ENCODE measurements at regions of chr17 and their contacts with region 1.

Region 1: DNA sequence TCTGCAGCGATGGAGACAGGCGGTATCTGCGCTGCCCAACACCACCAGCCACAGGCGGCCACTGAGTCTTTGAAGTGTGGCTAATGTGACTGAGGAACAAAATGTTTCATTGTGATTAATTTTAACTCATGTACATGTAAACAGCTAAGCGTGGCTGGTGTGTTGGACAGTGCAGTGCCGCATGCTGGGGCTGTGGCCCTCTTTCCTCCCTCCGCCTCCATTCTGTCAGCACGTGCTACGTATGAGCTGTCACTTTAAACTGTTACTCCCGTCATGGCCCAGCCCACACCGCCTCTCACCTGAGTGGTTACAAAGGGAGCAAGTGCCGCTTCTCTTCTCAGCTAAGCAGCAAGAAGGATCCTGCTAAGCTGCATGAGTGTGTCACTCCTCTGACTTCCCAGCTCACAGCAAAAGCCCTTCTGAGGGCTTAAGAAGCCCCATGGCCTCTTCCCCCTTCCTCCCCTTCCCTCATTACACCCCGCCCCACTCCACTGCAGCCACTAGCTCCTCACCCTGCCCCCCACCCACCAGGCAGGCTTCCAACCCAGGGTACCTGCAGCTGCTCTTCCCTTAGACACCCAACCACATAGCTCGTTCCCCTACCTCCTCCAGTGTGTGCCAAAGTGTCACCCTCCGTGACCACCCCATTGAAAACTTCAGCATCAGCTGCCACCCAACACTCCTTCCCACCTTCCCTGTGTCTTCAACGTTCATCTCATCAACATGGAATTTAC is 15.0 kb downstream of the HASPIN start:
- DNase-seq: no peak
- H3K4me3 ChIP-seq: no peak overlapping the region
- H3K27ac ChIP-seq: no peak overlapping the region
- H3K4me1 ChIP-seq: no peaks in the 10 kb centered on the region
- H3K27me3 ChIP-seq: peaks cover 0 to 5% of the 10 kb centered on the region in 2 experiments
- CTCF ChIP-seq: no peak
- POLR2A ChIP-seq: no peak

Region 2: GRCh38 chr17:3048767-3049471 is 689.8 kb before region 1 on chr17:
- CTCF ChIA-PET with region 1: interaction called, 7 read pairs
- POLR2A ChIA-PET with region 1: interaction called, 5 read pairs
- dilution Hi-C with region 1: no loop called
- intact Hi-C with region 1: loop called (anchors 5 kb)
- DNase-seq: peak; percentile 99
- H3K4me3 ChIP-seq: peak overlapping the region; percentile 44 to 75 (median 72)
- H3K27ac ChIP-seq: no peak overlapping the region
- H3K4me1 ChIP-seq: no peaks in the 10 kb centered on the region
- H3K27me3 ChIP-seq: no peaks in the 10 kb centered on the region
- CTCF ChIP-seq: peak; percentile 74 to 86
- POLR2A ChIP-seq: peak; percentile 70

Region 3: DNA sequence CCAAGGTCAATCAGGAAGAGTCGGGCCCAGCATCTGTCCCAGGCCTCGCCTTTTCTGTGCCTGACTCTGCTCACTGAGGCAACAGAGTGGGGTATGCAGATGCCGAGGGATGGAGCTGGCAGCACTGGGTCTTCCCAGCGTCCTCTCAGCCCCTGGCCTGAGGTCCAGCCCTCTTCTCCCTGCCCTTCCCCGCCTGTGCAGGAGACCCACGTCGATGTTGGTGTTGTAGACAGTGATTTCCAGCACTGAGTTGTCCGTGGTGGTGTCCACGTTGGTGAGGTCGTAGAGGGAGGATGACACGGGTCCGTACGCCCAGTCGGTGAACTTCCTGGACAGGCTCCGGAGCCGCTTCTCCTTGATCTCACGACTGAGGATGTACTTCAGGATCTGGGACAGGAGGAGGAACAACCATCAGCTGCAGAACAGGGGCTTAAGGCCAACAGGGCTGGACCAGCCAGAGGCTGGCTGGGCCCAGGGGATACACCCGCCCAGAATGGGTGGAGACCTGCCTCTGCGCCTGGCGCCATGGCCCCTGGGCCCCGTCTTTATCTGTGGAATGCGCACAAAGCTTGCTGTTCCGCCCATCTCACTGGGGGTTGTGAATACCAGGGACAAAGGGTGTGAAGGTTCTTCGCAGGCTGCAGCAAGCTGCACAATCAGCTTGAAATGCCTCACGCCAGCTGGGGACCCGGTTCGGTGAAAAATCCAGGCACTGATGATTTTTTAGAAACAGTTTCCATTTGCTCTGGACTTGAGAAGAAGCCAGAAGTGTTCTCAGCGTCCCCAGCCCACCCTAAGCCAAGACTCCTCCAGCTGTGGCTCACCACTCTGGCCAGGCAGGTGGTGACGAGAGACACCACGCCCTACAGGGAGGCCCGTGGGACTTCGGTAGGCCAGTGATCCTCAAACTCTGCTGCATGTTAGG is 208.7 kb before region 1 on chr17:
- CTCF ChIA-PET with region 1: no interaction called
- POLR2A ChIA-PET with region 1: no interaction called
- dilution Hi-C with region 1: no loop called
- intact Hi-C with region 1: no loop called
- DNase-seq: no peak
- H3K4me3 ChIP-seq: no peak overlapping the region
- H3K27ac ChIP-seq: no peak overlapping the region
- H3K4me1 ChIP-seq: no peaks in the 10 kb centered on the region
- H3K27me3 ChIP-seq: no peaks in the 10 kb centered on the region
- CTCF ChIP-seq: no peak
- POLR2A ChIP-seq: no peak

Region 4: GRCh38 chr17:3723556-3724369 is 15.0 kb before region 1 on chr17 and contains the start of gene HASPIN:
- CTCF ChIA-PET with region 1: interaction called, 34 read pairs
- POLR2A ChIA-PET with region 1: no interaction called
- dilution Hi-C with region 1: no loop called
- intact Hi-C with region 1: no loop called
- DNase-seq: peak; percentile 89
- H3K4me3 ChIP-seq: peak within 1 kb of the TSS; percentile 70 to 91 (median 89)
- H3K27ac ChIP-seq: peak within 1 kb of the TSS; percentile 54
- H3K4me1 ChIP-seq: peaks cover 28% of the 10 kb centered on the region
- H3K27me3 ChIP-seq: no peaks in the 10 kb centered on the region
- CTCF ChIP-seq: peak; percentile 9 to 56
- POLR2A ChIP-seq: peak; percentile 92
- total RNA-seq, gene HASPIN: 11.8 and 13.2 TPM in 2 replicates

Region 5: DNA sequence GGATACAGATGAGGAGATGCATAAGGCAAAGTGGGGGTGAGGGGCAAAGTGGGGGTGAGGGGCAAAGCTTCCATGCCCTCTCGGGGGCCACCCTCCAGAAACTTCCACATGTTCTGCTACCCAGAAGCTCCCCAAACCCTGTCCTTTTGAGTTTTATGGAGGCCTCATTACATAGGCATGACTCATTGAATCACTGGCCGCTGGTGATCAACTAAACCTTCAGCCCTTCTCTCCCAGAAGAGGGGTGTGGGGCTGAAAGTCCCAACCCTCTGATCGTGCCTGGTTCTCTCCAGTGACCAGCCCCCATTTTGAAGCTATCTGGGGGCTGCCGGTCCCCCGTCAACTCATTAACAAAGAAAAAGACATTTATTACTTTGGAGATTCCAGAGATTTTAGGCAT is 34.8 kb after region 1 on chr17:
- CTCF ChIA-PET with region 1: interaction called, 11 read pairs
- POLR2A ChIA-PET with region 1: no interaction called
- dilution Hi-C with region 1: no loop called
- intact Hi-C with region 1: no loop called
- DNase-seq: no peak
- H3K4me3 ChIP-seq: no peak overlapping the region
- H3K27ac ChIP-seq: no peak overlapping the region
- H3K4me1 ChIP-seq: no peaks in the 10 kb centered on the region
- H3K27me3 ChIP-seq: no peaks in the 10 kb centered on the region
- CTCF ChIP-seq: no peak
- POLR2A ChIP-seq: no peak

Region 6: DNA sequence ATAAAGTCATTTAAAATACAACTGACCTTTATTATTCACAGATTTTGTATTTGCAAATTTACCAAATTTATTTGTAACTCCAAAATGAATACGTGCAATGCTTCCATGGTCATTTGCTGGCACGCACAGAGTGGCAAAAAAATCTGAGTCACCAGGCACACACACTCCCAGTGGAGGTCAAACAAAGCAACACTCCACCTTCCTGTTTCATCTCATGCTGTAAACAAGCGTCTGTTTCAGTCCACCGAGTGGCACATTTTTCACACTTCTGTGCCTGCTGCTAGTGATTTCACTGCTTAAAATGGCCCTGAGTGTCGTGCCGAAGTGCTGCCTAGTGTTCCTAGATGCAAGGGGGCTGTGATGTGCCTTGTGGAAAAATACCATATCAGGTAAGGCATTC is 80.1 kb after region 1 on chr17:
- CTCF ChIA-PET with region 1: interaction called, 20 read pairs
- POLR2A ChIA-PET with region 1: no interaction called
- dilution Hi-C with region 1: no loop called
- intact Hi-C with region 1: no loop called
- DNase-seq: peak; percentile 88
- H3K4me3 ChIP-seq: no peak overlapping the region
- H3K27ac ChIP-seq: peak overlapping the region; percentile 6
- H3K4me1 ChIP-seq: peaks cover 10% of the 10 kb centered on the region
- H3K27me3 ChIP-seq: no peaks in the 10 kb centered on the region
- CTCF ChIP-seq: no peak
- POLR2A ChIP-seq: no peak

Region 7: DNA sequence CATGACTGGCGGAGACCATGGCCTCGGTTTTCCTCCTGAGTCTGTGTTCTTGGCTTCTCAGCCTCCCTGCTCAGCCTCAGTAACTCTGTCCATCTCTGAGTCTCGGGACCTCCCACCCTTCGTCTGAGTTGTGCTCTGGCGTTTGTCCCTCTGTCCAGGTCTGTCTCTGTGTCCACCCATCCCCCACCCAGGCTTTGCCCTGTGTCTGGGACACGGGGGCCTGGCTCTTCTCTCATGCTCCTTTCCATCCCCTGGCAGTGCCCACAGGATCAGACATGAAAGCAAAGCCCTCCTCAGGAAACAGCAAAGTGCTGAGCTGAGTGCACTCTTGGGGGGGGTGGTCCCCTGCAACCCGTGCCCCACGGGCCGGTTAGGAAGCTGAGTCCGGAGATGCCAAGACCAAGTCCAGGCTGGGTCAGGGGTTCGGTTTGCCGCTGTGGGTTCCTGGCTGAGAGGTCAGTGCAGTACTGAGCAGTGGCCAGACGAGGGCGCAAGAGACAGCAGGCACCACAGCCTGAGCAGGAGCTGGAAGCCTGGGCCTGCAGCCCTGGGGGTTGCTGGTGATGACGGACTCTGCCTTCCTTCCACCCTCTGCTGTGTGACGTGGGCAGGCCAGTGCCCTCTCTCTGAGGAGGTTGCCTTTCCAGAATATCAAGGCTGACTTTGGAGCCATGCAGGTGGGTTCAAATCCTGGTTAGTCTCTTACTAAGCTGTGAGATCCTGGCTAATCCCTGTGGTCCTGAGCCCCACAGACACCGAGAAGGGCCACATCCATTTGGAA is 175.0 kb after region 1 on chr17:
- CTCF ChIA-PET with region 1: interaction called, 29 read pairs
- POLR2A ChIA-PET with region 1: no interaction called
- dilution Hi-C with region 1: no loop called
- intact Hi-C with region 1: no loop called
- DNase-seq: peak; percentile 73
- H3K4me3 ChIP-seq: no peak overlapping the region
- H3K27ac ChIP-seq: no peak overlapping the region
- H3K4me1 ChIP-seq: peaks cover 15% of the 10 kb centered on the region
- H3K27me3 ChIP-seq: no peaks in the 10 kb centered on the region
- CTCF ChIP-seq: peak; percentile 97 to 99
- POLR2A ChIP-seq: no peak